Sigmoid colon (tissue), 7 donors: ENCODE measurements at regions of chr19 and their contacts with region 1.

Region 1: DNA sequence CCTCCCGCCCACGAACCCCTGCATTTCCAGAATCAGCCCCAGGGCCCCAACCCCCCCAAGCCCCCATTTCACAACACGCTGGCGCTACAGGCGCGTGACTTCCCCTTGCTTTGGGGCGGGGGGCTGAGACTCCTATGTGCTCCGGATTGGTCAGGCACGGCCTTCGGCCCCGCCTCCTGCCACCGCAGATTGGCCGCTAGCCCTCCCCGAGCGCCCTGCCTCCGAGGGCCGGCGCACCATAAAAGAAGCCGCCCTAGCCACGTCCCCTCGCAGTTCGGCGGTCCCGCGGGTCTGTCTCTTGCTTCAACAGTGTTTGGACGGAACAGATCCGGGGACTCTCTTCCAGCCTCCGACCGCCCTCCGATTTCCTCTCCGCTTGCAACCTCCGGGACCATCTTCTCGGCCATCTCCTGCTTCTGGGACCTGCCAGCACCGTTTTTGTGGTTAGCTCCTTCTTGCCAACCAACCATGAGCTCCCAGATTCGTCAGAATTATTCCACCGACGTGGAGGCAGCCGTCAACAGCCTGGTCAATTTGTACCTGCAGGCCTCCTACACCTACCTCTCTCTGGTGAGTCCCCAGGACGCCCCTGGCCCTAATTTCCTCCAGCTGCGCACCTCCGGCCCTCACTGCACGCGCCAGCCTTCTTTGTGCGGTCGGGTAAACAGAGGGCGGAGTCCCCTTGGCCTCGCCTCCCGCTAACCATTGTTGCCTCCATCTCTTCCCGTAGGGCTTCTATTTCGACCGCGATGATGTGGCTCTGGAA is at the start of gene FTL:
- DNase-seq: peak; percentile 99
- H3K4me3 ChIP-seq: peak within 1 kb of the TSS; percentile 89 to 95 (median 90)
- H3K27ac ChIP-seq: peak within 1 kb of the TSS; percentile 91 to 98 (median 95)
- H3K4me1 ChIP-seq: peaks cover 0 to 51% (median 44%) of the 10 kb centered on the region in 4 donors
- H3K27me3 ChIP-seq: no peaks in the 10 kb centered on the region
- CTCF ChIP-seq: no peak
- EP300 ChIP-seq: peak in 1 of 4 donors; percentile 58
- POLR2A ChIP-seq: peak; percentile 99
- total RNA-seq, gene FTL: 2,871 to 3,975 (median 3,459) TPM

Region 2: GRCh38 chr19:48637170-48637947 is 327.9 kb before region 1 on chr19 and contains the start of gene DBP:
- intact Hi-C with region 1: loop called (anchors 10 kb)
- DNase-seq: peak; percentile 100
- H3K4me3 ChIP-seq: peak within 1 kb of the TSS; percentile 54 to 89 (median 64)
- H3K27ac ChIP-seq: peak within 1 kb of the TSS; percentile 91 to 99 (median 96)
- H3K4me1 ChIP-seq: peaks cover 0 to 52% (median 38%) of the 10 kb centered on the region in 4 donors
- H3K27me3 ChIP-seq: no peaks in the 10 kb centered on the region
- CTCF ChIP-seq: no peak
- EP300 ChIP-seq: peak in 1 of 4 donors; percentile 74
- POLR2A ChIP-seq: peak; percentile 70 to 74
- total RNA-seq, gene DBP: 10.5 to 14.1 (median 11.9) TPM

Region 3: GRCh38 chr19:48780631-48781391 is 184.4 kb before region 1 on chr19:
- intact Hi-C with region 1: no loop called
- DNase-seq: no peak
- H3K4me3 ChIP-seq: no peak overlapping the region
- H3K27ac ChIP-seq: peak overlapping the region; percentile 40 to 55 (median 46)
- H3K4me1 ChIP-seq: peaks cover 0 to 14% (median 6%) of the 10 kb centered on the region in 4 donors
- H3K27me3 ChIP-seq: no peaks in the 10 kb centered on the region
- CTCF ChIP-seq: no peak
- EP300 ChIP-seq: no peak
- POLR2A ChIP-seq: no peak

Region 4: DNA sequence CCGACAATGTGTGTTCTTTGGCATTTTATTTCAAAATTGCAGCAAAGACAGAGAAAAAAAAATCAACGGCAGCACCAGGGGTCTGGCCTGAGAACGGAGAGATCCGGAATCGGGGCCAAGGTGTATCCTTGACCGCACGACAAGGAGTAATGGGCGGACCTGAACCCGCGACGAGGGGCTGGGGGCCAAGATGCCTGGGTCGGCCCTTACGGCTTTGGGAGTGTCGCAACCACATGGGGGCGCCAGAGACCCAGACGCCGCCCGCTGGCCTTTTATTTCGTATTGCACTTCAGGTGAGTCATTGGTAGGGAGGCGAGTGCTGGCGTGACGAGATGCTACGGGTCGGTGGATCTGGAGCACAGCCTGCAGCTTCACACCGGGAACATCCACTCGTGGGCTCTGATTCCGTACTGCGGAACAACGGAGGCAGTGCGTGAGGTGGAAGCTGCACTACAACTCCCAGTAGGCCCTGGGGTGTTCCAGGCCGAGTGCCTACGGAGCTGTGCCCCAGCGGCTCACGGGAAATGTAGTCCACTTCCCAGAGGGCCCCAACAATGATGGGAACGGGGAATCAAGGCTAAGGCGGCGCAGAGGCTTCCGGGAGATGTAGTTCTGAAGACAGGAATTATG is 170.1 kb before region 1 on chr19:
- intact Hi-C with region 1: loop called (anchors 5 kb)
- DNase-seq: peak; percentile 97
- H3K4me3 ChIP-seq: peak overlapping the region; percentile 8 to 55 (median 47)
- H3K27ac ChIP-seq: peak overlapping the region; percentile 86 to 90 (median 87)
- H3K4me1 ChIP-seq: peaks cover 0 to 21% (median 20%) of the 10 kb centered on the region in 4 donors
- H3K27me3 ChIP-seq: no peaks in the 10 kb centered on the region
- CTCF ChIP-seq: peak; percentile 95 to 97 (median 96)
- EP300 ChIP-seq: peak in 1 of 4 donors; percentile 30
- POLR2A ChIP-seq: no peak

Region 5: DNA sequence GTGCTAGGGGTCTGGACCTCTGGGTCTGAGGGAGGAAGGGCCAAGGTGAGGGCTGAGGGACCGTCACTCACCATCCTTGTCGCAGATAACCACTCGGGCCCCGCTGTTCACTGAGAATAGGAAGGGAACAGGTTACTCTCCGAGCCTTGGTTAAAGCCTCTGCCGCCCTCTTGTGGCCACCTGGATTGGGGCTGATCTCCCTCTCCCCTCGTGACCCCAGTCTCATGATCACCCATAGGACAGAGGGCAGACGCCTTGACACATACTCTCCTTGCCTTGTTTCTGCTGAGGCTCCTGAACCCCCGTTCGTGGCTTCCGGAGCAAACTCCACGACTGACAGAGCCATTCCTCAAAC is 129.5 kb before region 1 on chr19:
- intact Hi-C with region 1: loop called (anchors 2 kb)
- DNase-seq: peak; percentile 98
- H3K4me3 ChIP-seq: peak overlapping the region; percentile 30 to 51 (median 41)
- H3K27ac ChIP-seq: peak overlapping the region; percentile 71 to 86 (median 82)
- H3K4me1 ChIP-seq: peaks cover 0 to 27% (median 21%) of the 10 kb centered on the region in 4 donors
- H3K27me3 ChIP-seq: no peaks in the 10 kb centered on the region
- CTCF ChIP-seq: peak; percentile 86 to 98 (median 92)
- EP300 ChIP-seq: no peak
- POLR2A ChIP-seq: peak in 1 of 2 donors; percentile 42

Region 6: DNA sequence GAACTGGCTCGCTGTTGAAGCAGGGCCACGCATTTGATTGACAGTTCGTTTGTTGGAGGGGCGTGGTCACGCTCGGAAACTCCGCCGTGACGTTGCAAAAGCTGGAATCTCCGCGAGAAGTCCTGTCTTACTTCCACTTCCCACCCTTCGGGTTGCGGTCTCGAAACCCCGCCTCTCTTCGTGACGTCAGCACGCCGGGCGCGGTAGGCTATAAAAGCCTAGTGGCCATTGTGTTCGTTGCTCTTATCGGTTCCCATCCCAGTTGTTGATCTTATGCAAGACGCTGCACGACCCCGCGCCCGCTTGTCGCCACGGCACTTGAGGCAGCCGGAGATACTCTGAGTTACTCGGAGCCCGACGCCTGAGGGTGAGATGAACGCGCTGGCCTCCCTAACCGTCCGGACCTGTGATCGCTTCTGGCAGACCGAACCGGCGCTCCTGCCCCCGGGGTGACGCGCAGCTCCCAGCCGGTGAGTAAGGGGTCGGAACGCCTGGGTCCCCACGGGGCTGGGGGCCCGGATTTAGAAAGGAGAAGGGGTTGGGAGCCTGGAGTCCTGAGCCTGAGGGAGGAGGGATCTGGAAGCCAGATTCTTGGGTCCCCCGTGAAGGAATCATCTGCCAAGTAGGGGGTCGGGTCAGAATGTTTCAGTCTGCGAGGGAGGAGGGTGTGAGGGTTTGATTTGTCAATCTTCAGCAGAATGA is 92.9 kb before region 1 on chr19 and contains the start of gene PPP1R15A:
- intact Hi-C with region 1: loop called (anchors 1 kb)
- DNase-seq: peak; percentile 99
- H3K4me3 ChIP-seq: peak within 1 kb of the TSS; percentile 93 to 100 (median 94)
- H3K27ac ChIP-seq: peak within 1 kb of the TSS; percentile 99 to 100 (median 100)
- H3K4me1 ChIP-seq: peaks cover 0 to 65% (median 55%) of the 10 kb centered on the region in 4 donors
- H3K27me3 ChIP-seq: no peaks in the 10 kb centered on the region
- CTCF ChIP-seq: peak in 3 of 4 experiments; percentile 20 to 37 (median 29)
- EP300 ChIP-seq: peak in 1 of 4 donors; percentile 66
- POLR2A ChIP-seq: peak; percentile 99
- total RNA-seq, gene PPP1R15A: 22.1 to 69.8 (median 31.2) TPM